ENCODE measurements at regions of chr15 and their contacts with region 1.

Region 1: GRCh38 chr15:38699633-38700230 is 135.1 kb upstream of the RASGRP1 start:
- DNase-seq: peak; percentile 23 to 72 (median 54)
- H3K4me3 ChIP-seq: no peak overlapping the region
- H3K27ac ChIP-seq: no peak overlapping the region
- H3K27me3 ChIP-seq: peaks cover 0 to under 1% (median 0%) of the 10 kb centered on the region in 45 donors
- CTCF ChIP-seq: peak; percentile 47 to 89 (median 79)

Region 2: DNA sequence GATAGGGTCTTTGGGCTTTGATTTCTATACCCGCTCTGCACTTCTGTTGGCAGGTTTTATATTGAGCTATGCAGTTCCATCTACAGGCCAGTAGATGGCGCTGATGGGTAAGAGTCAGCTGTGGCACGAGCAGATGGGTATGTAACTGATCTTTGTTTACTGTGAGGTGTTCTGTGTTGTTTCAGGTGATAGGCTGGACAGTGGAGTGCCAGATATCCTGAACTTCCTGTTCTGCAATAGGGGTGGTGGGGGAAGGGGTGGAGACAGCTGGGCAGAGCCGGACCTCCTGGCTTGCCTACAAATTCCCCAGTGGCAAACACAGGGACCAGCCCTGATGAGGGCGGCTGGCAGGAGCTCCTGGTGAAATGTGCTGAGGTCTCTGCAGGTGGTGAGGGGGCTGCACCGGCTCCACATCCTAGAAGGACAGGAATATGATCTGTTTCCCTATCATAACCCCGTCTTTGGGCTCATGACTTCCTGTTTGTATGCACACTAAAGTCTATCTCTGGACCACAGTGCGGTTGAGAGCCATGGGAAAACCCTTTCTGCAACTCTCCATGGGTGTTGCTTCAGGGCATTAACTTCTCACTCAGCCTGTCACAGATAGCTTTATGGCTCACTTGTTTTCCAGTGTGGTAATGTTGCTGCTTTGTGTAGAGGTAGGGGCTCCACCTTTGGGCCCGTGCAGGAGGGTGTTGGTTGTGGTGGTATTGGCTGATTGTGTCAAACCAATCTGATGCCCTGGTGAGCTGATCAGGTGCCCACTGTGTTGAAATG is 259.2 kb before region 1 on chr15:
- intact Hi-C with region 1: loop called (anchors 10 kb)
- DNase-seq: peak in 3 of 10 donors; percentile 18 to 42 (median 38)
- H3K4me3 ChIP-seq: peak overlapping the region in 20 of 59 donors; percentile 4 to 45 (median 23)
- H3K27ac ChIP-seq: no peak overlapping the region
- H3K27me3 ChIP-seq: peaks cover 0 to 4% (median 0%) of the 10 kb centered on the region in 45 donors
- CTCF ChIP-seq: peak; percentile 77 to 97 (median 89)

Region 3: DNA sequence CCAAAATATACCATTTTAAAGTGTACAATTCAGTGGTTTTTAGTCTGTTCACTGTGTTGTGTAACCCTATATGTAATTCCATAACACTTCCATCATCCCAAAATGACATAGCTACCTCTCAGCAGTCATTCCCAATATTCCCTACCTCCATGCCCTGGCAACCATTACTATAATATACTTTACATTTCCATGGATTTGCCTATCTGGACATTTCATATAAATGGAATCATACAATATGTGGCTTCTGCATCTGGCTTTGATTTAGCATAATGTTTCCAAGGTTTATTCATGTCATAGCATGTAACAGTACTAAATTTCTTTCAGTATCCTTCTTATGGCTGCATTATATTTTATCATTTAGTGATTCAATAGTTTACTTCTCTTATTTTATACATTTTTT is 220.5 kb before region 1 on chr15:
- intact Hi-C with region 1: loop called in 1 of 2 experiments (anchors 5 kb)
- DNase-seq: no peak
- H3K4me3 ChIP-seq: no peak overlapping the region
- H3K27ac ChIP-seq: no peak overlapping the region
- H3K27me3 ChIP-seq: no peaks in the 10 kb centered on the region
- CTCF ChIP-seq: no peak

Region 4: DNA sequence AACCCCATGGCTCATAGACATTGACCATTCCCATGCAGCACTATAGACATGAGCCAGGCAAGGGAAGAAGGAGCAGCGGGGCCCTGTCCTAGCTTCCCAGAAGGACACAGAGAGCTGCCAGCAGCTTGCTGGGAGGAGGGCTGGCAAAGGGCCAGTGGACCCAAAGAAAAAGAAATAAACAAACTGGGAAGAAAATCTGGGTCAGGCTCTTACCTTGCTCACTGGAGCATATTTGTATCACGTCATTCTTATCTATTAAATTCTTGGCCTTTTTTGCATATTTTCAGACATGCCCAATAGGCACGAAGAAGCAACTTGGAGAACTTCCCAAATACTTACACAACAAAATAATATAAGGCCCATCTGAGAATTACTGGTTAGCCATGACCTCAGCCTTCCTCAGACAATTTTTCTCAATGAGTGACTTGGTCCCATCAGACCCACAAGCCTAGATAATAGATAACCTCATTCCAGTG is 163.5 kb before region 1 on chr15:
- intact Hi-C with region 1: no loop called
- DNase-seq: peak in 2 of 10 donors; percentile 39 to 91
- H3K4me3 ChIP-seq: no peak overlapping the region
- H3K27ac ChIP-seq: peak overlapping the region in 51 of 59 donors; percentile 10 to 86 (median 66)
- H3K27me3 ChIP-seq: no peaks in the 10 kb centered on the region
- CTCF ChIP-seq: no peak

Region 5: GRCh38 chr15:38768970-38769369 is 69.2 kb after region 1 on chr15:
- intact Hi-C with region 1: no loop called
- DNase-seq: peak in 1 of 10 donors; percentile 20
- H3K4me3 ChIP-seq: no peak overlapping the region
- H3K27ac ChIP-seq: no peak overlapping the region
- H3K27me3 ChIP-seq: peaks cover 0 to 4% (median 0%) of the 10 kb centered on the region in 45 donors
- CTCF ChIP-seq: peak in 4 of 56 donors; percentile 8 to 21 (median 12)

Region 6: DNA sequence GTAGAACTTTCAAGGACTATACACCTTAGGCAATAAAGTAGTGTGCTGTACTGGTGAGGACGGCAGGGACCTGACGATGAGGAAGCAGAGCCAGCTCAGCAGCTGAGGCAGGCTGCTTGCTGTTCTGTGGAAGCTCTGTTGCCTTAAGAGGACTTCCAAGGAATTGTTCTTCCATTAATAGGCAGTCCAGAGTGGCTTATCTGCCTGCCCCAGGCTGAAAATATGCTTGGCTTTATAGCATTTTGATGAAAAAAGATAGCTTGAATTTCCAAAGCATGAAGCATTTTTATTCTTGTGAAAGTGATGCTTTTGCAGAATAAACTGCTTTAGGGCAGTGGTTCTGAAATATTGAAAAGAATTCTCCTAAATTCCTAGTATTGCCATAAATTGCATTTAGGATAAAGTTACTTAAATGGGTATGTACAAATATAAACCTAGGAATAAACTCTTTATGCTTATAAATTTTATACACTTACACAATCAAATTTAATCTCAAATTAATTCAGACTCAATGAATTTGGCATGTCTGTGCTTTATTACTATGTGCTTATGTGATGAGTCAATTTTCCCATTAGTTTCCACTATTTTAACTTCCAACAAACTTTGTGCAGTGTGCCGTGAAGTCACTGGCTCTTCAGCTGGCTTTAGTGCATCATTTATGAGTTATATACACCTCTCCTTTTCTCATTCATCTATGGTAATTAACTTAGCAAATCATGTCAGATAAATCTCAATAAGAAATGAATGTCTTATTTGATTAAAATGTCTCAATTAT is 95.9 kb after region 1 on chr15:
- intact Hi-C with region 1: no loop called
- DNase-seq: no peak
- H3K4me3 ChIP-seq: no peak overlapping the region
- H3K27ac ChIP-seq: no peak overlapping the region
- H3K27me3 ChIP-seq: peaks cover 0 to 3% (median 0%) of the 10 kb centered on the region in 45 donors
- CTCF ChIP-seq: no peak